WTC11 (cell line): ENCODE measurements at regions of chr20 and their contacts with region 1.

Region 1: GRCh38 chr20:15654208-15654645 is 919.0 kb downstream of the KIF16B start:
- DNase-seq: peak; percentile 44
- ATAC-seq: peak; percentile 99
- H3K4me3 Mint-ChIP-seq: no peak overlapping the region
- H3K27ac Mint-ChIP-seq: no peak overlapping the region
- H3K4me1 Mint-ChIP-seq: peaks cover 13% of the 10 kb centered on the region
- H3K27me3 Mint-ChIP-seq: no peaks in the 10 kb centered on the region
- CTCF ChIP-seq: peak; percentile 58

Region 2: GRCh38 chr20:15491575-15491974 is 162.7 kb before region 1 on chr20:
- CTCF ChIA-PET with region 1: interaction called, 33 read pairs
- POLR2A ChIA-PET with region 1: no interaction called
- DNase-seq: peak; percentile 54
- ATAC-seq: peak; percentile 95
- H3K4me3 Mint-ChIP-seq: no peak overlapping the region
- H3K27ac Mint-ChIP-seq: no peak overlapping the region; the same call in 1 of the 2 replicates
- H3K4me1 Mint-ChIP-seq: peaks cover 24% of the 10 kb centered on the region
- H3K27me3 Mint-ChIP-seq: no peaks in the 10 kb centered on the region
- CTCF ChIP-seq: peak; percentile 49; the same call in 1 of the 2 replicates

Region 3: GRCh38 chr20:15637950-15638349 is 16.3 kb before region 1 on chr20:
- CTCF ChIA-PET with region 1: interaction called, 18 read pairs
- POLR2A ChIA-PET with region 1: no interaction called
- DNase-seq: peak; percentile 17
- ATAC-seq: peak; percentile 92
- H3K4me3 Mint-ChIP-seq: no peak overlapping the region
- H3K27ac Mint-ChIP-seq: peak overlapping the region; percentile 84
- H3K4me1 Mint-ChIP-seq: peaks cover 42% of the 10 kb centered on the region
- H3K27me3 Mint-ChIP-seq: peaks cover 6% of the 10 kb centered on the region; the same call in 1 of the 2 replicates
- CTCF ChIP-seq: no peak

Region 4: GRCh38 chr20:15643714-15644113 is 10.5 kb before region 1 on chr20:
- CTCF ChIA-PET with region 1: interaction called, 10 read pairs
- POLR2A ChIA-PET with region 1: no interaction called
- DNase-seq: no peak
- ATAC-seq: peak; percentile 44
- H3K4me3 Mint-ChIP-seq: no peak overlapping the region
- H3K27ac Mint-ChIP-seq: no peak overlapping the region
- H3K4me1 Mint-ChIP-seq: peaks cover 12% of the 10 kb centered on the region
- H3K27me3 Mint-ChIP-seq: peaks cover 6% of the 10 kb centered on the region; the same call in 1 of the 2 replicates
- CTCF ChIP-seq: no peak

Region 5: GRCh38 chr20:15831201-15831600 is 177.0 kb after region 1 on chr20:
- CTCF ChIA-PET with region 1: no interaction called
- POLR2A ChIA-PET with region 1: no interaction called
- DNase-seq: no peak
- ATAC-seq: no peak
- H3K4me3 Mint-ChIP-seq: no peak overlapping the region
- H3K27ac Mint-ChIP-seq: no peak overlapping the region
- H3K4me1 Mint-ChIP-seq: peaks cover 22% of the 10 kb centered on the region
- H3K27me3 Mint-ChIP-seq: no peaks in the 10 kb centered on the region
- CTCF ChIP-seq: no peak